Activated naive CD4-positive, alpha-beta T cell treated with anti-CD3 and anti-CD28 coated beads for 36 hours (primary cell): ENCODE measurements at regions of chr15 and their contacts with region 1.

Region 1: DNA sequence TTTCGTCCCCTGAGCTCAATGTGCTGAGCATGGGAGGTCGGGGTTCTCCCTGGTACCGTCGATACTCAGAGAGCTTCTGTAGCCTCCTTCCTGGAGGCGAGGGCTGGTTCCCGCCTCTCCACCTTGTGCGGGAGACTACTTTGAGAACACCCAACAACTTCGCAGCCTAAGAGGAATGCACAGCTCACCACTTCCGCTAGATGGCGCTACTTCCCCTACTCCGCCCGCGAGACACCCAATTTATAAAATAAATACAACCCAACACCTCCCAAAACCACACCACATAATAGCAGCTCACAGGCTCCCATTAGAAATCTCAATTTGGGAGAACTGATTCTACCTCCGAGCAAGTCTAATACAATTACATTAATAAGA is 1.2 kb downstream of the RGMA start:
- DNase-seq: peak; percentile 88
- H3K4me3 Mint-ChIP-seq: peak overlapping the region; percentile 70
- H3K27ac Mint-ChIP-seq: no peak overlapping the region
- H3K4me1 Mint-ChIP-seq: peaks cover 6% of the 10 kb centered on the region
- H3K27me3 Mint-ChIP-seq: peaks cover 56% of the 10 kb centered on the region

Region 2: GRCh38 chr15:93035953-93036800 is 51.6 kb before region 1 on chr15:
- CTCF ChIA-PET with region 1: interaction called, 15 read pairs
- intact Hi-C with region 1: no loop called
- DNase-seq: peak; percentile 67
- H3K4me3 Mint-ChIP-seq: no peak overlapping the region
- H3K27ac Mint-ChIP-seq: no peak overlapping the region
- H3K4me1 Mint-ChIP-seq: peaks cover 5% of the 10 kb centered on the region
- H3K27me3 Mint-ChIP-seq: no peaks in the 10 kb centered on the region

Region 3: GRCh38 chr15:93141371-93141794 is 53.6 kb after region 1 on chr15:
- CTCF ChIA-PET with region 1: no interaction called
- intact Hi-C with region 1: no loop called
- DNase-seq: no peak
- H3K4me3 Mint-ChIP-seq: no peak overlapping the region
- H3K27ac Mint-ChIP-seq: no peak overlapping the region
- H3K4me1 Mint-ChIP-seq: peaks cover 3% of the 10 kb centered on the region
- H3K27me3 Mint-ChIP-seq: no peaks in the 10 kb centered on the region

Region 4: GRCh38 chr15:93164409-93164808 is 76.6 kb after region 1 on chr15:
- CTCF ChIA-PET with region 1: interaction called, 5 read pairs
- intact Hi-C with region 1: loop called (anchors 2 kb)
- DNase-seq: peak; percentile 59
- H3K4me3 Mint-ChIP-seq: no peak overlapping the region
- H3K27ac Mint-ChIP-seq: no peak overlapping the region
- H3K4me1 Mint-ChIP-seq: peaks cover 4% of the 10 kb centered on the region
- H3K27me3 Mint-ChIP-seq: peaks cover 7% of the 10 kb centered on the region

Region 5: DNA sequence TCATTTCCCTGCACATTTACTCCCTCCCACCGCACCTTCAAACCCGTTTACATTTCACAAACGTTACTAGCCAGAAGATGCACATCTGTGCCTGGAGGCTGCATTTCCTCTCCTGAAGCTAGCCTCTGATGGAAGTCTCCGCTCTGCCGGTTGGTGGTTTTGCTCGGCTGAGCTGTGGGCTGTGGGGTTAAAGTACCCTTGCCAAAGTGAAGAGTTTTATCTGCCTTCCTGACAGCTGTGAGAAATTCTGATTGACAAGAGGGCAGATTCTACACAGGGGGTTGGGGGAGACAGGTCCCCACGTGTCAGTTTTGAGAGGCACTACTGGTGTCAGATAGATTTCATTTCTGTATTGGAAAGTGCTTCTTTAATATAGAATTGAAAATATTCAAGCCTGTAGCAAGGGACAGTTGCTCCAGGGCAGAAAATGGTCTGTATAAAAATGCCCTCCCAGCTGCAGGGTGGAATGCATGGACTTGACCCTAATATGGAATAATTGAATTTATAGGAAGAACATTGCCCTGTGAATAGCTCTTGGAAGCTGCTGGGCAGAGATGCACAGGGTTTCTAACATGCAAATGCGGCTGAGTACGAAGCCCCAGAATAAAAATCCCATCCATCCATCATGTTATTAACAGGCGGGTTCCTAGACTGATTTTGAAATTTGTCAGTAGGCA is 202.3 kb after region 1 on chr15:
- CTCF ChIA-PET with region 1: interaction called, 4 read pairs
- intact Hi-C with region 1: loop called (anchors 5 kb)
- DNase-seq: no peak
- H3K4me3 Mint-ChIP-seq: no peak overlapping the region
- H3K27ac Mint-ChIP-seq: no peak overlapping the region
- H3K4me1 Mint-ChIP-seq: no peaks in the 10 kb centered on the region
- H3K27me3 Mint-ChIP-seq: peaks cover 11% of the 10 kb centered on the region

Region 6: GRCh38 chr15:93997084-93997918 is 909.5 kb after region 1 on chr15:
- CTCF ChIA-PET with region 1: no interaction called
- intact Hi-C with region 1: loop called (anchors 10 kb)
- DNase-seq: no peak
- H3K4me3 Mint-ChIP-seq: no peak overlapping the region
- H3K27ac Mint-ChIP-seq: no peak overlapping the region
- H3K4me1 Mint-ChIP-seq: no peaks in the 10 kb centered on the region
- H3K27me3 Mint-ChIP-seq: no peaks in the 10 kb centered on the region